ENCODE measurements at regions of chr10 and their contacts with region 1.

Region 1: GRCh38 chr10:96395931-96396877 is 37.4 kb upstream of the OPALIN start:
- DNase-seq: peak; percentile 42
- ATAC-seq: peak; percentile 79
- H3K4me3 Mint-ChIP-seq: no peak overlapping the region
- H3K27ac Mint-ChIP-seq: no peak overlapping the region
- H3K4me1 Mint-ChIP-seq: peaks cover 5% of the 10 kb centered on the region
- H3K27me3 Mint-ChIP-seq: peaks cover 24% of the 10 kb centered on the region
- CTCF ChIP-seq: peak; percentile 90

Region 2: GRCh38 chr10:96229568-96230030 is 166.6 kb before region 1 on chr10:
- CTCF ChIA-PET with region 1: no interaction called
- POLR2A ChIA-PET with region 1: no interaction called
- intact Hi-C with region 1: no loop called
- DNase-seq: peak; percentile 71
- ATAC-seq: peak; percentile 63
- H3K4me3 Mint-ChIP-seq: peak overlapping the region; percentile 36
- H3K27ac Mint-ChIP-seq: peak overlapping the region; percentile 76
- H3K4me1 Mint-ChIP-seq: peaks cover 50% of the 10 kb centered on the region
- H3K27me3 Mint-ChIP-seq: no peaks in the 10 kb centered on the region
- CTCF ChIP-seq: no peak

Region 3: GRCh38 chr10:96374985-96375830 is 21.0 kb before region 1 on chr10:
- CTCF ChIA-PET with region 1: interaction called, 4 read pairs
- POLR2A ChIA-PET with region 1: no interaction called
- intact Hi-C with region 1: loop called (anchors 1 kb)
- DNase-seq: peak; percentile 61
- ATAC-seq: peak; percentile 92
- H3K4me3 Mint-ChIP-seq: peak overlapping the region; percentile 78
- H3K27ac Mint-ChIP-seq: no peak overlapping the region
- H3K4me1 Mint-ChIP-seq: peaks cover 6% of the 10 kb centered on the region
- H3K27me3 Mint-ChIP-seq: peaks cover 13% of the 10 kb centered on the region
- CTCF ChIP-seq: peak; percentile 84

Region 4: DNA sequence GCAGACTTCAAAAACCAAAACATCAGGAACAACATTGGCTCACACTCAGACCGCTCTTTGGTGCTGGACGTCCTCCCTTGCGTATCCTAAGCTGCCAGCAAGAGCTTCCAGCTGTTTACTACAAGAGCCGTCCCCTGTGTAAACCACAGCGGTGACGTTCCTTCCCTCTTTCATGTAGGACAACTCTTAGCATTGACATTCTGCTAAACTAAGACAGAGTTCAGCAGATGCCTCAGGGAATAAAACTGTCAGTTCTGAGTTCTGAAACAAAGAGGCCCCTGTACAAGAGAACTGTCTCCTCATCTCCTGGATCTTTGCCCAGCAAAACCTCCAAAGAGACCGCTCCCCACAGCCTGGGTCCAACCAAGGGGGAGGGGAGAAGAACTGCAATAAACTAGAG is 20.4 kb after region 1 on chr10:
- CTCF ChIA-PET with region 1: no interaction called
- POLR2A ChIA-PET with region 1: interaction called, 12 read pairs
- intact Hi-C with region 1: no loop called
- DNase-seq: no peak
- ATAC-seq: no peak
- H3K4me3 Mint-ChIP-seq: no peak overlapping the region
- H3K27ac Mint-ChIP-seq: no peak overlapping the region
- H3K4me1 Mint-ChIP-seq: no peaks in the 10 kb centered on the region
- H3K27me3 Mint-ChIP-seq: peaks cover 9% of the 10 kb centered on the region
- CTCF ChIP-seq: no peak

Region 5: DNA sequence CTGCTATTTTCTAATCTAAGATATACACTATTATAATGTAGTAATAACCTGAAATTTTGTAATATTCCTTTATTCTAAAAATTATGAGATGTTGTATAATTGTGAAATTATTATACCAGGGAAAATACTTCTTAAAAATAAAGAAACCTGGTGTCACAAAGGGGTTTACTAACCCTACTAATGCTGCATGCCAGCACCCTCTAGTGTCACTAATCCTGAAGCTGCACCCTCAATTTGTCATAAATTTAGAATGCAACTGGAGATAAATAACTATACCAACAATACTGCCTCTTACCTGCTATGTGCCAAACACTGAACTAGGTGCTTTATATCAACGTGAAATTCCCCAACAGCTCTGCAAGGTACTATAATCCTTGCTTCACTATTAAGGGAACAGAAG is 159.8 kb after region 1 on chr10:
- CTCF ChIA-PET with region 1: interaction called, 8 read pairs
- POLR2A ChIA-PET with region 1: interaction called, 4 read pairs
- intact Hi-C with region 1: loop called (anchors 1 kb)
- DNase-seq: no peak
- ATAC-seq: no peak
- H3K4me3 Mint-ChIP-seq: no peak overlapping the region
- H3K27ac Mint-ChIP-seq: no peak overlapping the region
- H3K4me1 Mint-ChIP-seq: no peaks in the 10 kb centered on the region
- H3K27me3 Mint-ChIP-seq: no peaks in the 10 kb centered on the region
- CTCF ChIP-seq: no peak

Region 6: DNA sequence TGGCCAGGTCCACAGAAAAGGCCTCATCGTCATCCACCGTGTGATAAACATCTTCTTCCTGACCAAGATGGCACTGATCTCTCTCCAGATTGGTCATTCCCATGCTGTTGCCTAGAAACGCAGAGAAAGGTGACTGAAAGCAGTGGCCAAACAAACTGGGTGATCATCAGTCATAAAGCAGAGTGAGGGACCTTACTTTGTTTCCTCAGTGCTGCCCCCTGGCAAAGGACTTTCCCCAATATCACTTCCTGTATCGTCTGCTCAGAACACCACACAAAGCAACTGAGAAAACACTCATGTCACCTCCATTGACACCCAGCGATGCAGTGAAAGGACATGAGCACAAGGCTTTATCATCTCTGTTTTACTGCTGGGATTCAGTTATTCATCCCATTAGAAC is 230.6 kb after region 1 on chr10:
- CTCF ChIA-PET with region 1: no interaction called
- POLR2A ChIA-PET with region 1: no interaction called
- intact Hi-C with region 1: loop called (anchors 1 kb)
- DNase-seq: no peak
- ATAC-seq: peak; percentile 40
- H3K4me3 Mint-ChIP-seq: no peak overlapping the region
- H3K27ac Mint-ChIP-seq: peak overlapping the region; percentile 46
- H3K4me1 Mint-ChIP-seq: no peaks in the 10 kb centered on the region
- H3K27me3 Mint-ChIP-seq: no peaks in the 10 kb centered on the region
- CTCF ChIP-seq: no peak